ENCODE measurements at regions of chrX and their contacts with region 1.

Region 1: DNA sequence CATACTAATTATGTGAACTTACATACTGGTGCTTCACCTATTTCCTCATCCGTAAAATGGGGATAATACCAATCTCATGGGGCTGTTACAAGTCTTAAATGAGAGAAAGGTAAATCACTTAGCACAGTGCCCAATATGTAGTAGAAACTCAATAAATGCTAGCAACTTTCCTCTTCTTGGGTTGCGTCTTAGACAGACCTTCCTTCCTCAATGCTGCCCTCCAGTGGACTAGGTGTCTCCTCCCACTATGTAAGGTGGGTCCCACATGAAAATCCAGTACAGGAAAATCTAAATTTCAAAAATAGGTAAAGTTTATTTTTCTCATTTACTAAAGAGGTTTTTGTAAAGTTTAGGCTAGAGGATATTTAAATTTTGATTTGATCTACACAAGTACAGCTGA is 20.6 kb downstream of the ZDHHC9 start:
- DNase-seq: peak; percentile 38 to 62 (median 59)
- H3K4me3 ChIP-seq: no peak overlapping the region
- H3K4me3 Mint-ChIP-seq: peak overlapping the region in 2 of 8 donors; percentile 57 to 69
- H3K27ac ChIP-seq: no peak overlapping the region
- H3K27ac Mint-ChIP-seq: peak overlapping the region in 2 of 7 donors; percentile 7 to 23
- H3K4me1 ChIP-seq: peaks cover 10% of the 10 kb centered on the region
- H3K4me1 Mint-ChIP-seq: peaks cover 9 to 19% (median 11%) of the 10 kb centered on the region in 4 donors
- H3K27me3 ChIP-seq: no peaks in the 10 kb centered on the region
- H3K27me3 Mint-ChIP-seq: no peaks in the 10 kb centered on the region

Region 2: DNA sequence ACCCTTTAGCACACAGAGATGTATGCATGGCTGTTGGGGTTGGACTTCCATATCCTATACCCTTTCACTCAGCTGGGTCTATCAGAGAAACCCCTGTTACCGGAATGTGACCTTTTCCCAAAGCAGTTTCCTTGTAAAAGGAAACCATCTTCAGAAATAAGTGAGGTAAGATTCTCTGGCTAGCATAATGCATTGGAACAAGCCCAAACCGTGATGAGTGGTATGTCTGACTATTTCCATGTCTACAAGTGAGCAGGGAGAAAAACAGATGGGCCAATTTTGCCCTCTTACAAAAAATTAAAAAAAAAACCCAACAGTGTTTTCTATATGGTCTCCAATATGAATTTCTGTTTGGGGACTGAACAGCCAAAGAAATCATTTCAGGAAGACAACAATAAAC is 583.7 kb before region 1 on chrX:
- CTCF ChIA-PET with region 1: no interaction called
- POLR2A ChIA-PET with region 1: no interaction called
- intact Hi-C with region 1: no loop called
- DNase-seq: no peak
- H3K4me3 ChIP-seq: no peak overlapping the region
- H3K4me3 Mint-ChIP-seq: no peak overlapping the region
- H3K27ac ChIP-seq: no peak overlapping the region
- H3K27ac Mint-ChIP-seq: no peak overlapping the region
- H3K4me1 ChIP-seq: no peaks in the 10 kb centered on the region
- H3K4me1 Mint-ChIP-seq: no peaks in the 10 kb centered on the region
- H3K27me3 ChIP-seq: no peaks in the 10 kb centered on the region
- H3K27me3 Mint-ChIP-seq: peaks cover 0 to 1% of the 10 kb centered on the region in 2 donors

Region 3: DNA sequence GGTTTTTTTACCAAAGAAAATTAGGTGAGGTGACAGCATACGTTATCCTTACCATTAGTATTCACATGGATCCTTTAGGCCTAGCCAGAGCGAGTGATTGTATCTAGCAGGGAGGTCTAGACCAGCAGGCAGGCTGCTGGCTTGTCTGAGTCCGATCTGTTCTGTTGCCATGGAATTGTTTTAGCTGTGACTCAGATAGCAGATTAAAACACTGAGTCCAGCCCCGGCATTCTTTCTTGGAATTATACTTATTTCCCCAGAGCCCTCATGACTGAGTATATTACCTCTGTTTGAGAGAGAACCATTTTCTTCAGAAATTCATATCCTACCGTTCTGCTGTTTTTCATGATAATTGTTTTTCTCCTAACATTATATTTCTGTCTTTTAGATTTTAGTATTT is 245.6 kb before region 1 on chrX:
- CTCF ChIA-PET with region 1: no interaction called
- POLR2A ChIA-PET with region 1: no interaction called
- intact Hi-C with region 1: no loop called
- DNase-seq: no peak
- H3K4me3 ChIP-seq: no peak overlapping the region
- H3K4me3 Mint-ChIP-seq: no peak overlapping the region
- H3K27ac ChIP-seq: no peak overlapping the region
- H3K27ac Mint-ChIP-seq: no peak overlapping the region
- H3K4me1 ChIP-seq: no peaks in the 10 kb centered on the region
- H3K4me1 Mint-ChIP-seq: no peaks in the 10 kb centered on the region
- H3K27me3 ChIP-seq: no peaks in the 10 kb centered on the region
- H3K27me3 Mint-ChIP-seq: no peaks in the 10 kb centered on the region

Region 4: DNA sequence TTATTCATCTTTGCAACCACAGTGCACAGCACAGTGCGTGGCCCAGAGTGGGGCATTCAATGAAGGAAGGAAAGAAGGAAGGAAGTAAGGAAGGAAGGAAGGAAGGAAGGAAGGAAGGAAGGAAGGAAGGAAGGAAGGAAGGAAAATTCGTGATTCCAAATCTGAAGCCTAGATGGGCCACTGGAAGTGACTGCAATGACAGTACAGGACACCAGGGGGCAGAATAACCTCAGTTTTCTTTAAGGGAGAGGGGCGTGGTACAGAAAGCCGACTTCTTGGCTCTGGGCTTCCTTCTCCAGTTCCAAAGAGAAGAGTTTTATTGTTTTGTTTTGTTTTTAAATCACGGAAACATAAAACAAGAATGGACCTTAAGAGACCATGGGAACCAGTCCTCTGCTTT is 216.2 kb before region 1 on chrX:
- CTCF ChIA-PET with region 1: interaction called, 5 read pairs
- POLR2A ChIA-PET with region 1: no interaction called
- intact Hi-C with region 1: loop called (anchors 1 kb)
- DNase-seq: peak; percentile 48 to 65 (median 58)
- H3K4me3 ChIP-seq: no peak overlapping the region
- H3K4me3 Mint-ChIP-seq: peak overlapping the region in 1 of 8 donors; percentile 39
- H3K27ac ChIP-seq: no peak overlapping the region
- H3K27ac Mint-ChIP-seq: peak overlapping the region in 1 of 7 donors; percentile 50
- H3K4me1 ChIP-seq: peaks cover 12% of the 10 kb centered on the region
- H3K4me1 Mint-ChIP-seq: peaks cover 2 to 25% (median 18%) of the 10 kb centered on the region in 4 donors
- H3K27me3 ChIP-seq: no peaks in the 10 kb centered on the region
- H3K27me3 Mint-ChIP-seq: no peaks in the 10 kb centered on the region

Region 5: DNA sequence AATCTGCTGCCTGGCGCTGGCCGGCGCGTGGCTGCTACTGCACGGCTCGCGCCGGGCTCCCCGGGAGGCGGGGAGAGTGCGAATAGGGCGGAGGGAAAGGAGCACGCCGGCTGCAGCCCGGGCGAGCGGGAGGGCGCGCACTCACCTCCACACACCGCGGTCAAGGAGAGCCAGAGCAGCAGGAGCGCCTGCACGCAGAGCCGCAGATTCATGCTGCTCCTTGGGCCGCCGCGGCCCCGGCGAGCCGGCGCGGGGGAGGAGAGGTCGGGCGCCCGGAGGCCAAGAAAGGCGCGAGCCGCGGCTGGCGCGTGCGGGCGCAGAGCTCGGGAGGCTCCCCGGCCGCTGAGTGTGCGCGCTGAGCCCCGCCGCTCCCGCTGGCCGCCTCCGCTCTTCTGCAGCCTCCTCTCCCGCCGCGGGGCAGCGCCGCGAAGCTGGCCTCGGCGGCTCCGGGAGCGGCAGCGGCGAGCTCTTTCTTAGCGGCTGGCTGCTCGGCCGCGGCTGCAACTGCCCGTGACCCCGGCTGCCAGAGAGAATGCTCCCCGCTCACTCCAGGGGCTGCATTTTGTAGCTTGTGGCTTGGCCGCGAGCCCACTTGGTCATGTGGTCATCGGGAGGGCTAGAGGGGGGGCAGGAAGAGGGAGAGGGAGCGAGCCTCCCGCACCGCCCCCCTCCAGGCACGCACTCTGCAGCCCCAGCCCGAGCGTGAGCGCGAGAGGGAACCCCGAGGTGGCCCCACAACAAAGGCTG is 168.5 kb before region 1 on chrX and contains the start of gene APLN:
- CTCF ChIA-PET with region 1: interaction called, 14 read pairs
- POLR2A ChIA-PET with region 1: no interaction called
- intact Hi-C with region 1: loop called (anchors 1 kb)
- DNase-seq: peak in 3 of 5 donors; percentile 11 to 16 (median 14)
- H3K4me3 ChIP-seq: no peak within 1 kb of the TSS
- H3K4me3 Mint-ChIP-seq: peak within 1 kb of the TSS; percentile 53 to 76 (median 74)
- H3K27ac ChIP-seq: no peak within 1 kb of the TSS
- H3K27ac Mint-ChIP-seq: no peak within 1 kb of the TSS
- H3K4me1 ChIP-seq: peaks cover 10% of the 10 kb centered on the region
- H3K4me1 Mint-ChIP-seq: peaks cover 3 to 9% (median 6%) of the 10 kb centered on the region in 4 donors
- H3K27me3 ChIP-seq: peaks cover 4% of the 10 kb centered on the region
- H3K27me3 Mint-ChIP-seq: peaks cover 0 to 5% of the 10 kb centered on the region in 2 donors
- total RNA-seq, gene APLN: not detected

Region 6: DNA sequence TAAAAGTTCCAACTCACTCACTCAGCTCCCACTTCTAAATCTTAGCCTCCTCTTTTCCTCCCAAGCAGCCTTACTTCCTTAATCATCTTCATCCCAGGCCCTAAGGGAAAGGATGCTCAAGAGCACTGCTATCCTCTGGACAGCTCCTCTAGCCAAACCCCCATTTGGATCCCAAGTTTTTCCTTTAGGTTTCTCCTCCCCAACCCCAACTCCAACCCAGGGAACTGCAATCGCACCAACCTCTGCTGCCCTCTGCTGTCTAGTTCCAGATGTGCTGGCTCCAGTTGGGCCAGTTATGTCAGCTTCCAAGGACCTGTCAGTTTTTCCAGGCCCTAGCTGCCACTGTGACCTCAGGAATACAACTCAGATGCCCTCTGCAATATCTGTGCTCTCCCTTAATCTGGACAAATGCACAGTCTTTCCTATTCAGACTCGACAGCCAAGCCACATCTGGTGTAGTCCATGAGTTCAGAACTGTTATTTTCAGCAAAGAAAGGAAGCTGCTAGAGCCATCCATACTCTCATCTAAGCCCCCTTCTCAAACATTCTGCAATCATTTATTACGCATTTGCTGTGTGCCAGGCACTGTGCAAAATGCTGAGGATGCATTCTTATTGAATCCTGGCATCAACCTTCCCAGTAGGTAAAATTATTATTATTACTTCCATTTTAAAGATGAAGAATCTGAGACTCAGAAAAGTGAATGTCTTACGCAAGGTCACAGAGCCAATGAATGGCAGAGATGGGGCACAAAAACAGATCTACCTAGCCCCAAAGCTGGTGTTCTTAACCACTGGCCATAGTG is 96.6 kb before region 1 on chrX:
- CTCF ChIA-PET with region 1: interaction called, 18 read pairs
- POLR2A ChIA-PET with region 1: no interaction called
- intact Hi-C with region 1: loop called (anchors 1 kb)
- DNase-seq: peak in 2 of 5 donors; percentile 18 to 24
- H3K4me3 ChIP-seq: no peak overlapping the region
- H3K4me3 Mint-ChIP-seq: no peak overlapping the region
- H3K27ac ChIP-seq: no peak overlapping the region
- H3K27ac Mint-ChIP-seq: peak overlapping the region in 2 of 7 donors; percentile 50 to 73
- H3K4me1 ChIP-seq: peaks cover 26% of the 10 kb centered on the region
- H3K4me1 Mint-ChIP-seq: peaks cover 27 to 46% (median 34%) of the 10 kb centered on the region in 4 donors
- H3K27me3 ChIP-seq: no peaks in the 10 kb centered on the region
- H3K27me3 Mint-ChIP-seq: no peaks in the 10 kb centered on the region

Region 7: GRCh38 chrX:129754056-129755024 is 68.8 kb before region 1 on chrX:
- CTCF ChIA-PET with region 1: interaction called, 31 read pairs
- POLR2A ChIA-PET with region 1: interaction called, 8 read pairs
- intact Hi-C with region 1: loop called (anchors 1 kb)
- DNase-seq: no peak
- H3K4me3 ChIP-seq: no peak overlapping the region
- H3K4me3 Mint-ChIP-seq: peak overlapping the region in 4 of 8 donors; percentile 9 to 62 (median 28)
- H3K27ac ChIP-seq: no peak overlapping the region
- H3K27ac Mint-ChIP-seq: peak overlapping the region; percentile 20 to 86 (median 66)
- H3K4me1 ChIP-seq: peaks cover 51% of the 10 kb centered on the region
- H3K4me1 Mint-ChIP-seq: peaks cover 23 to 63% (median 44%) of the 10 kb centered on the region in 4 donors
- H3K27me3 ChIP-seq: no peaks in the 10 kb centered on the region
- H3K27me3 Mint-ChIP-seq: no peaks in the 10 kb centered on the region

Region 8: DNA sequence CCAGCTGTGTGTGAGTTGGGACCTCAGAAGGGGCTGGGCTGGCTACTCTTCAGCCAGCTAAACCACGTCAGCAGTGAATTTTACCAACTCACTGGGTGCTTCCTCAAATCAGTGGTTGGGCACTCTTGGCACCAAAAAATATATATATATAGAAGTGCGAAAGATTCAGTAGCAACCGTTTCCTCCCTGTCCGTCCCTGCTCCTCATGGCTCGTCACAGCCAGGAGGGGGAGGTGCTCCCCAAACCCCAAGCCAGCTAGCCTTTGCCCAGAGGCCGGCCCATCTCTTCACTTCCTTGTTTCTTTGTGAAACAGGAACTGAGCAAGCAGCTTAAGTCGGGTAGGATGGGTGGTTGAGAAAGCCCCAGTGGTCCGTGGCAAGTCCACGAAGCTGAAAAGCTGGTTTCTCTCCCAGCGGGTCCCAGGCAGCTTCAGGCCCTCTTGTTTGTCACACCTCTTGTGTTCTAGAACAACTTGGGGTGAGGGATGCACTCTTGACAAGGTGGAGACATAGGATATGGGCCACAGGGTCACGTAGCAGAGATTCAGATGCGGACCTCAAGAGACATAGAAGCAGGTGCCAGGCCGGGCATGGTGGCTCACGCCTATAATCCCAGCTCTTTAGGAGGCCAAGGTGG is 50.2 kb before region 1 on chrX:
- CTCF ChIA-PET with region 1: interaction called, 10 read pairs
- POLR2A ChIA-PET with region 1: interaction called, 3 read pairs
- intact Hi-C with region 1: no loop called
- DNase-seq: peak in 2 of 5 donors; percentile 31 to 69
- H3K4me3 ChIP-seq: no peak overlapping the region
- H3K4me3 Mint-ChIP-seq: peak overlapping the region in 7 of 8 donors; percentile 59 to 84 (median 72)
- H3K27ac ChIP-seq: peak overlapping the region; percentile 26
- H3K27ac Mint-ChIP-seq: peak overlapping the region; percentile 86 to 96 (median 94)
- H3K4me1 ChIP-seq: peaks cover 92% of the 10 kb centered on the region
- H3K4me1 Mint-ChIP-seq: peaks cover 45 to 92% (median 69%) of the 10 kb centered on the region in 4 donors
- H3K27me3 ChIP-seq: no peaks in the 10 kb centered on the region
- H3K27me3 Mint-ChIP-seq: no peaks in the 10 kb centered on the region

Region 9: DNA sequence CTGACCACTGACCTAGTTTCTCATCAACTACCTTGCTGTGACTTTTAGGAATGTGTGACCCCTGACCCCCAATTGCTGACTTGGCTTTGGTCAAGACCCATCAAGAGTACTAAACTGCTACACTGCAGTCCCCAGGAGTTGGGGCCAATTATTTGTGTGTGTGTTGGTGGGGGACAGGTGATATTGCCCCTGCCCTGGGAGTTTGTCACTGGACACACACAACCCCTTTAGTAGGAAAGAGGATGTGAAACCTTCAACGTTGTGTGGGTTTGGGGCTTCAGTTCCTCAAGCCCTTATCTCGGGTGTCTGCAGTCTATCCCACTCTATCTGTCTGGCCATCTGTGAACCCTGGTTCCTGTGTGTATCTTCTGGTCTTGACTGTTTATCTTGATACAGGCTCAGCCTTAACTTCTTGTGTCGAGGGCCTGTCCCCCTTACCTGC is 36.9 kb before region 1 on chrX:
- CTCF ChIA-PET with region 1: interaction called, 27 read pairs
- POLR2A ChIA-PET with region 1: interaction called, 6 read pairs
- intact Hi-C with region 1: loop called (anchors 5 kb)
- DNase-seq: no peak
- H3K4me3 ChIP-seq: no peak overlapping the region
- H3K4me3 Mint-ChIP-seq: peak overlapping the region; percentile 69 to 81 (median 76)
- H3K27ac ChIP-seq: peak overlapping the region; percentile 26
- H3K27ac Mint-ChIP-seq: peak overlapping the region; percentile 69 to 94 (median 89)
- H3K4me1 ChIP-seq: peaks cover 54% of the 10 kb centered on the region
- H3K4me1 Mint-ChIP-seq: peaks cover 35 to 67% (median 53%) of the 10 kb centered on the region in 4 donors
- H3K27me3 ChIP-seq: no peaks in the 10 kb centered on the region
- H3K27me3 Mint-ChIP-seq: no peaks in the 10 kb centered on the region

Measured in CD4-positive, alpha-beta memory T cell (primary cell).